ENCODE measurements at regions of chr18 and their contacts with region 1.

Region 1: DNA sequence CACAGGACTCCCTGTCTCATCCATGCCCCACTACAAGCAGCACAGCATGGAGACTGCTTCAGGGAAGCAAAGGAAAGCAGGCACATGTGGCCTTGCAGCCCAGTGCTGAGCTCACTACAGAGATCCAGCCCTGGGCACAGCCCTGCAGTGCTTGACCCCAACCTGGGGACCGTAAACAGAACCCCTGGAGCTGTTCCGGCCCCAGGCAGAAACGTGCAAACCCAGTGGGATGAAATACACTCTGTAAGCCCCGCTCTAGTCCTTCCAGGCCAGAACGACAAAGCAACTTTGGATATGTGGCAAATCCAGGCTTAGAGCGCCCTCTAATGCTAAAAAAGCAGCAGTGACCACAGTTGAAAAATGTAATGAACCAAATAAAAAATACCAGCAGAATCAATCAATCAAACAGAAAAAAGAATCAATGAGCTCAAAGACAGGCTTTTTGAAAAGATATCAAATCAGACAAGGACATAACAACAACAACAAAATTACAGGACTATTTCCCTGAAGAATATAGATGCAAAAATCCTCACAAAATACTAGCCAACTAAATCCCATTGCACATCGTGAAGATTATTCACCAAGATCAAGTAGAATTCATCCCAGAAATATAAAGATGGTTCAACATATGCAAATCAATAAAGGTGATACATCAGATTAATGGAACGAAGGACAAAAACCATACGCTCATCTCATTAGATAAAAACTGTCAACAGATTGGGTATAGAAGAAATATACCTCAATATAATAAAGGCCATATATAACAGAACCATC is 45.6 kb downstream of the ZNF519 start:
- DNase-seq: no peak
- H3K4me3 Mint-ChIP-seq: no peak overlapping the region
- H3K27ac Mint-ChIP-seq: no peak overlapping the region
- H3K4me1 Mint-ChIP-seq: no peaks in the 10 kb centered on the region
- H3K27me3 Mint-ChIP-seq: no peaks in the 10 kb centered on the region

Region 2: GRCh38 chr18:13823707-13824395 is 262.8 kb before region 1 on chr18 and contains the start of gene MC5R:
- intact Hi-C with region 1: loop called (anchors 1 kb)
- DNase-seq: peak; percentile 57
- H3K4me3 Mint-ChIP-seq: peak within 1 kb of the TSS; percentile 62
- H3K27ac Mint-ChIP-seq: no peak within 1 kb of the TSS
- H3K4me1 Mint-ChIP-seq: peaks cover 5% of the 10 kb centered on the region
- H3K27me3 Mint-ChIP-seq: peaks cover 21% of the 10 kb centered on the region
- total RNA-seq, gene MC5R: not detected in 2 replicates

Region 3: DNA sequence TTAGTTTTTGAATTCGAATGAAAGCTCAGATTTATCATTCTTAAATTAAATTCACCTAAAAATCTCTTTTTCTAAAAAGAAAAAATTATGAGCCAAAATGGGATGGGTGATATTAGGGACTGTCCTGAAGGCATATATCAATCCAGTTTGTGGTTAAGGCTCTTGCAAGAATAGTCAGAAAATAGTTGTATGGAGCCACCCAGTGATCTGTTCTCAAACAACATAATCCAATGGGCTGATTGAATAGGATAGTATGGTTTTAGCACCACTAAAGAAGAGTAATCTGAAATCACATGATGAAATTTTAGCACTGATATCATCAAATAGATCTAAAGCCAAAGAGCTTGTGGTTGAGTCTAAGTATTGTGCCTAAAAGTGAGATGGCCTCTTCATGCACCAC is 42.7 kb before region 1 on chr18:
- intact Hi-C with region 1: no loop called
- DNase-seq: no peak
- H3K4me3 Mint-ChIP-seq: no peak overlapping the region
- H3K27ac Mint-ChIP-seq: no peak overlapping the region
- H3K4me1 Mint-ChIP-seq: no peaks in the 10 kb centered on the region
- H3K27me3 Mint-ChIP-seq: no peaks in the 10 kb centered on the region

Region 4: DNA sequence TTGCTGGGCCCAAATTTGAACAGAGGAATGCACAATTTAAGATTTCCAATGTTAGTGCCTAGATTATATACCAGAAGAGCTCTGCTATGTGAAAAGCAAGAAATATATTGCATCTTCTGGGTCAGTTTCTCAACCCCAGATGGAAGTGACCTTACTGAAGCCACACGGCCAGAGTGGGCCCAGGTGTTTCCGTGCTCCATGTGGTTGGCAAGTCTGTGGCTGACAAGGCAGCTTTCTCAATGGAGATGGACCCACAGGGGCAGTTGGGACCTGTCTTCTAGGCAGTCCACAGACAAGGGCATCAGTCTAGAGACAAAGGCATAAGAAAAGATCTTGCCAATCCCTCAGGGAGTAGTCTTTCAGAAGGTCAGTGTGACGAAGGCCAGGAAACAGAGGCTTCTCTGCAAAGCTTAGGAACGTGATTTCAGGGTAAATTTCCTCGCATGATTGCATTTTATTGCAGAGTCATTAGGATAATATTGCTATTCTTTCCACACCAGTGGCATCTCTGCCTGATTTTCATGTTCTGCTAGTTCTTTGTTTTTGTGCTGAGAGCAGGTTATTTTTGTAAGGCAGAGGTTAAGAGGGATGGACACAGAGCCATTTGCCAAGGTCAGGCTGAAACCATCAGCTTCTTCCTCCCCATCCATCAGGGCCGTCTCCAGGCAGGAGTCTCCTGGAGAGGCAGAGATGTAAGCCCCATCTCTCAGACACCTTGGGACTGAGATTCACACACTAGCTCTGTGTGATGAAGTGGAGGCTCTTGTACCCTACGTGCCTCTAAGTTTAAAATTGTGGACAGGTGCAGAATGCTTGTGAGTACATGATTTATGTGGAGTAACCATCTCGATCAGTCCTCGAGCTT is 863.4 kb after region 1 on chr18:
- intact Hi-C with region 1: no loop called
- DNase-seq: no peak
- H3K4me3 Mint-ChIP-seq: no peak overlapping the region
- H3K27ac Mint-ChIP-seq: no peak overlapping the region
- H3K4me1 Mint-ChIP-seq: no peaks in the 10 kb centered on the region
- H3K27me3 Mint-ChIP-seq: no peaks in the 10 kb centered on the region

Measured in activated T-helper 2 cell treated with anti-CD3 and anti-CD28 coated beads, Interferon-gamma antibody, Interleukin-2, Interleukin-4, amounts not matched to agents 10 μg/mL and 5 μg/mL and 100 μg/mL, durations not matched to agents 14 hours and 24 hours and 36 hours (primary cell).